Activated CD4-positive, alpha-beta memory T cell treated with anti-CD3 and anti-CD28 coated beads for 36 hours (primary cell): ENCODE measurements at regions of chr16 and their contacts with region 1.

Region 1: DNA sequence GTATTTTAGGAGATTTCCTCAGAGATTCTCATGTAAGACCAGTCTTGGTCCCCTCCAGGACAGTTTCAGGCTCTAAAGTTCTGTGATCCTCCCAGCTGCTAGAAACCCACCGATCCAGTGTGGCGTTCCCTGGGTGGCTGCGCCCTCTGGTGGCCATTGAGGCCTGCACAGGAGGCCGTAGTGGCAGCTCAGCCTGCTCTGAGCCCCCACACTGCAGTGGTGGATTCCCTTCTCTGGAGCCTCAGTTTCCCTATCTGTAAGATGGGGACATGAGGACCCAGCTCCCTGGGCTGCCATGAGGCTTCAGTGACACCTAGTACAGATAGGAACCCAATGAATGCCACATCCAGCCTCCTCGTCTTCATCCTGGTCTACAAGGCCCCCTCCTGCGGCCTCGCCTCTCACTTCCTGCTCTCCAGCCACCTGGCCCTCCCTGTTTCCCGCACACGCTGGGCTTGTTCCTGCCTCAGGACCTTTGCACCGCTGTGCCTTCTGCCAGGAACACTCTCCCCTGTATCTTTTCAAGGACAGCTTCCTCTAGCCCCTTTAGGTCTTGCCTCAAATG is 16.5 kb downstream of the CCDC102A start:
- DNase-seq: peak; percentile 85
- H3K4me3 Mint-ChIP-seq: no peak overlapping the region
- H3K27ac Mint-ChIP-seq: no peak overlapping the region
- H3K4me1 Mint-ChIP-seq: peaks cover 3% of the 10 kb centered on the region
- H3K27me3 Mint-ChIP-seq: no peaks in the 10 kb centered on the region

Region 2: DNA sequence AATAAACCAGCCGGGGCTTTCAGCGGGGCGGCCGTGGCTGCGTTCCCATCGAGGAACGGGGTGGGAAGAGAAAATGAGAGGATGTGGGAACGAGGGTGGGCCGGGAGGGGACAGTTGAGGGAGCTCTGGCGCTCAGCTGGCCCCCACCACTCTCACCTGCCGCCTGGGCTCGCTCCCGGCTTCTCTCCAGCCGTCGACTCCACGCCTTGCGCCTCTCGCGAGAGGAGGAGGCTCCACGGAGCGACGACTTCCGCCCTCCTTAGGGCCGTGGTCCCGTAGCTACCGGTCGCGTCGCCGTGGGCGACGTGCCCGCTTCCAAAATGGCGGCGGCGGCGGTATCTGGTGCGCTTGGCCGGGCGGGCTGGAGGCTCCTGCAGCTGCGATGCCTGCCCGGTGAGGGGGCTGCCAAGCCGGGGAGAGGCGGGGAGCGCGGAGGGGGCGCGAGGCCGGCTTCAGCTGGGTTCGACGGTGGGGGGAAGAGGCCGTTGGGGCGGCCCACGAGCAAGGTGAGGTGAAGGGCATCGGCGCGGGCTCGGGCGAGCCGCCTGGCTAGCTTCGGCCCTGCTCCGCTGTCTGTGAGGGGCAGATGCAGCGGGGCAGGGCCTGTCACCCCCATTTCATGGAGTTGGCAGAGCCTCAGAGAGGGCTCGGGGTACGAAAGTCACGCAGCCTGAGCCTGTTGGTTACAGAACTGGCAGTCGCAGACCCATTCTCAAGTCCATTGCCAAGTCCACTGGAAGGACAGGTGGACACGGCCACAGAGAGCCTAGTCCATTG is 72.5 kb before region 1 on chr16 and contains the starts of genes CIAPIN1 and COQ9:
- CTCF ChIA-PET with region 1: interaction called, 17 read pairs
- POLR2A ChIA-PET with region 1: no interaction called
- intact Hi-C with region 1: no loop called
- DNase-seq: peak; percentile 96
- H3K4me3 Mint-ChIP-seq: peak within 1 kb of the TSS; percentile 91
- H3K27ac Mint-ChIP-seq: peak within 1 kb of the TSS; percentile 70
- H3K4me1 Mint-ChIP-seq: peaks cover 28% of the 10 kb centered on the region
- H3K27me3 Mint-ChIP-seq: no peaks in the 10 kb centered on the region
- total RNA-seq, gene CIAPIN1: 34.8 to 38.5 TPM
- total RNA-seq, gene COQ9: 29.8 to 33.0 TPM

Region 3: DNA sequence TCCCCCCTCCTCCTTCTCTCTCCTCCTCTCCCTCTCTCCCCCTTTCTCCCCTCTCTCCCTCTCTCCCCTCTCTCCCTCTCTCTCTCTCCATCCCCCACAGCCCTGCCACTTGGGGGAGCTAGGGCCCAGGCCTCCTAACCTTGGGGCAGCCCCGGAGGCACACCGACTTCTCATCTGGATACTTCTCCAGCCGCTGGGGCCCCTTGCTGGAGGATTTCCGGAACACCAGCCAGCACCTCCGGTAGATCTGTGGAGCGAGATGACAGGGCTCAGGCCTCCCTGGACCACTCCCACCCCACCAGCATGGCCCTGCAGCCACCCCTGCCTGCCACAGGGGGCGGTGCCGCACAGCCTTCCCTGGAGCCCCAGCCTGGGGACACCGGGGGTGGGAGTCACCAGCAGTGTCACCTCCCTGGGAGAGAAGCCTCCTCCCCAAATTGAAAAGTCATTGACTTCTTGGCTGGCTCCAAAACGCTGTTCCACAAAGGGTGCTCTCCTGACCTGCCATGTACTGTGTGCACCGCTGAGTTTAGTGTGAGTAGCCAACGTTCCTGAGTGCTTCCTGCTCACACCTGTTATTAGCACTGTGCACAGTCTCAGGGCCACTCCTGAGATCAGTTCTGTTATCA is 44.1 kb before region 1 on chr16:
- CTCF ChIA-PET with region 1: interaction called, 39 read pairs
- POLR2A ChIA-PET with region 1: no interaction called
- intact Hi-C with region 1: loop called (anchors 1 kb)
- DNase-seq: peak; percentile 96
- H3K4me3 Mint-ChIP-seq: peak overlapping the region; percentile 6
- H3K27ac Mint-ChIP-seq: peak overlapping the region; percentile 45
- H3K4me1 Mint-ChIP-seq: peaks cover 14% of the 10 kb centered on the region
- H3K27me3 Mint-ChIP-seq: no peaks in the 10 kb centered on the region

Region 4: GRCh38 chr16:57530104-57530521 is 10.2 kb after region 1 on chr16:
- CTCF ChIA-PET with region 1: interaction called, 26 read pairs
- POLR2A ChIA-PET with region 1: no interaction called
- intact Hi-C with region 1: no loop called
- DNase-seq: peak; percentile 87
- H3K4me3 Mint-ChIP-seq: peak overlapping the region; percentile 60
- H3K27ac Mint-ChIP-seq: peak overlapping the region; percentile 92
- H3K4me1 Mint-ChIP-seq: peaks cover 56% of the 10 kb centered on the region
- H3K27me3 Mint-ChIP-seq: no peaks in the 10 kb centered on the region

Region 5: GRCh38 chr16:57544119-57544653 is 24.3 kb after region 1 on chr16:
- CTCF ChIA-PET with region 1: interaction called, 26 read pairs
- POLR2A ChIA-PET with region 1: no interaction called
- intact Hi-C with region 1: no loop called
- DNase-seq: peak; percentile 58
- H3K4me3 Mint-ChIP-seq: peak overlapping the region; percentile 35
- H3K27ac Mint-ChIP-seq: peak overlapping the region; percentile 29
- H3K4me1 Mint-ChIP-seq: peaks cover 40% of the 10 kb centered on the region
- H3K27me3 Mint-ChIP-seq: no peaks in the 10 kb centered on the region

Region 6: GRCh38 chr16:57639172-57639887 is 119.5 kb after region 1 on chr16:
- CTCF ChIA-PET with region 1: no interaction called
- POLR2A ChIA-PET with region 1: no interaction called
- intact Hi-C with region 1: no loop called
- DNase-seq: peak; percentile 14
- H3K4me3 Mint-ChIP-seq: no peak overlapping the region
- H3K27ac Mint-ChIP-seq: no peak overlapping the region
- H3K4me1 Mint-ChIP-seq: no peaks in the 10 kb centered on the region
- H3K27me3 Mint-ChIP-seq: peaks cover 18% of the 10 kb centered on the region